ENCODE measurements at regions of chr3 and their contacts with region 1.

Region 1: DNA sequence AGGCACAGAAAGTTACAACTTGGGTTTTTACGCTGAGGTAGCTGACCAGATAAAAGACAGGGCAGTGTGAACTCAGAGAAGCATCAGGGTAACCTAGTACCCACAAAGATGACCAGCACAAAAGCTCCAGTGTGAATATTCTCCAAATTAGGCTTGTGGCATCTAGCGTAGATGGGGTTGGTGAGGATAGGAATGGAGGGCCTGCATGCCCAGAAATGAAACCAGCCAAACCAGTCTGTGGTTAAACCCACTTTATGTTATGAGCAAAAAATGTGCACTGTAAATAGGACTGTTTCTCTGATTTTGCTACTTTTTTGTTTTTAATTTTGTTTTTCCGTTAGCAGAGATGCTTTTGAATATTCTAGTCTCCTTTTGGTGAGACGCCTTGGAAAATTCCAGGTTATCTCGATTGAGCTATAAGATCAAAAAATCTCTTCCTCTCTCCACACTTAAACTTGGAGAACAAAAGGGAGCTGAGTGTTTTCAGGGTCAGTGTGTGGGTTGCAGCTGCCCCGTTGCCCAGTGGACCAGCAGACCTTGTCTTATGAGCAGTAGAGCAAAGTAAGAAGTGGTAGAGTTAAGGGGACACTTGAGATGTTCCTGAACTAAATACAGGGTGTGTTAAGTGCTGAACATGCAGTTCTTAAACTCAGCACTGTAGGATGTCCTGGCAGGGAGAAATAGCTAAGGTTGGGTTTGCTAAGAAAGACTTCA is 132.9 kb downstream of the C3orf38 start:
- DNase-seq: no peak
- ATAC-seq: no peak
- H3K4me3 ChIP-seq: no peak overlapping the region
- H3K27ac ChIP-seq: no peak overlapping the region
- H3K4me1 ChIP-seq: no peaks in the 10 kb centered on the region
- H3K27me3 ChIP-seq: no peaks in the 10 kb centered on the region
- CTCF ChIP-seq: no peak
- POLR2A ChIP-seq: no peak

Region 2: DNA sequence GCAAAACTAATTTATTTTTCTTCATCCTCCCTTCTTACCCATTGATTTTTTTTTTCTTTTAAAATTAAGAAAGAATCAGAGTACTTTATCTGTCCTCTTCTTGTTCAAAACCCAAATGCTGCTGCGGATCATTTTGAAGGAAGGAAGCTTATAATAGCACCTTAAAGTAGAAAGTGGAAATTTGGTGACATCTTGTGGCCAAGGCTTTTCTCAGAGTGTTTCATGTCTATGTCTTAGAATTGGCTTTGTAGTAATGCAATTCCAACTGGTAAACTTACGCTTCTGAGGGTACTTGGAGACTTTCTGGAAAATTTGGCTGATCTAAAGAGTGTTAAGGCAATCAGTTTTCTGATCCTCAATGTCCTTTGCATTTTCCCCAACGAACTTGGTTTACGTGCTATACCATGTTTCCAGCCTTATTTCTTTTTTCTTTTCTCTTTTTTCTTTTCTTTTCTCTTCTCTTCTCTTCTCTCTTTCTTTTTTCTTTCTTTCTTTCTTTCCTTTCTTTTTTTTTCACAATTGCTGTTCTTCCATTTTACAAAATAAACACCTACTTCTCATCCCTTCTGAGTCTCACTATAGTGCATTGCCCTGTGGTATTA is 102.2 kb before region 1 on chr3:
- intact Hi-C with region 1: no loop called
- DNase-seq: no peak
- ATAC-seq: no peak
- H3K4me3 ChIP-seq: no peak overlapping the region
- H3K27ac ChIP-seq: no peak overlapping the region
- H3K4me1 ChIP-seq: no peaks in the 10 kb centered on the region
- H3K27me3 ChIP-seq: no peaks in the 10 kb centered on the region
- CTCF ChIP-seq: peak in 10 of 12 donors; percentile 15 to 68 (median 28)
- POLR2A ChIP-seq: no peak

Region 3: GRCh38 chr3:88219138-88219792 is 63.4 kb before region 1 on chr3:
- intact Hi-C with region 1: no loop called
- DNase-seq: peak in 3 of 5 donors; percentile 9 to 26 (median 26)
- ATAC-seq: peak in 2 of 4 donors; percentile 52 to 73
- H3K4me3 ChIP-seq: no peak overlapping the region
- H3K27ac ChIP-seq: no peak overlapping the region
- H3K4me1 ChIP-seq: no peaks in the 10 kb centered on the region
- H3K27me3 ChIP-seq: no peaks in the 10 kb centered on the region
- CTCF ChIP-seq: peak; percentile 15 to 62 (median 38)
- POLR2A ChIP-seq: no peak

Region 4: DNA sequence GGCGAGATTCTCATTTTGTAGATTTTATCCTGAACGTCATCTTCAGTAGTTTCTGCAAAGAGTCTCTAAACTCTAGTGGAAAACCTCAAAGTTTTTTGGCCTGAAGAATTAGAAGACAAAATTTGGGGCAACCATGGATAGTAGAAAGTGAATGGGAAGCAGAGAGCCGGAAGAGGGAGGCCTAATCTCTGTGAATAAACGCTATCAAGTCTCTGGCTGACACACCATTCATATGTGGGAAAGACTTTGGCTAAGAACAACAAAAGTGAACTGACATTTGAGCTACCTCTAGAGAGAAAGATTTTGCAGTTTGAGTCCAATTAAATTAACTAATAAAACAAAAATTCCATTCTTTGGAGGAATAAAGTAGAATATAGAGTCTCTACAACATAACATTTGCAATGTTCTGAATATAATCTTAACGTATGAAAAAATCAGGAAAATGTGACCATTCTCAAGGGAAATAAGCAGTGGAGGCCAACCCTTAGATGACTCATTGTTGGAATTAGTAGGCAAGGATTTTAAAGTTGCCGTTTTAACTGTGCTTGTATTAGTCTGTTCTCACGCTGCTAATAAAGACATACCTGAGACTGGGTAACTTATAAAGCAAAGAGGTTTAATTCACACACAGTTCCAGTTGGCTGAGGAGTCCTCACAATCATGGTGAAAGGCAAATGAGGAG is 51.6 kb after region 1 on chr3:
- intact Hi-C with region 1: loop called in 1 of 10 experiments (anchors 2 kb)
- DNase-seq: no peak
- ATAC-seq: peak in 2 of 4 donors; percentile 48 to 69
- H3K4me3 ChIP-seq: no peak overlapping the region
- H3K27ac ChIP-seq: peak overlapping the region in 2 of 12 donors; percentile 34 to 46
- H3K4me1 ChIP-seq: no peaks in the 10 kb centered on the region
- H3K27me3 ChIP-seq: no peaks in the 10 kb centered on the region
- CTCF ChIP-seq: peak in 1 of 12 donors; percentile 14
- POLR2A ChIP-seq: no peak

Region 5: GRCh38 chr3:88509582-88509981 is 226.9 kb after region 1 on chr3:
- intact Hi-C with region 1: no loop called
- DNase-seq: no peak
- ATAC-seq: no peak
- H3K4me3 ChIP-seq: no peak overlapping the region
- H3K27ac ChIP-seq: no peak overlapping the region
- H3K4me1 ChIP-seq: no peaks in the 10 kb centered on the region
- H3K27me3 ChIP-seq: no peaks in the 10 kb centered on the region
- CTCF ChIP-seq: no peak
- POLR2A ChIP-seq: no peak